ENCODE measurements at regions of chr2 and their contacts with region 1.

Region 1: GRCh38 chr2:178478439-178479274 is at the start of gene FKBP7:
- DNase-seq: peak; percentile 87 to 92 (median 90)
- H3K4me3 ChIP-seq: peak within 1 kb of the TSS; percentile 51 to 94 (median 78)
- H3K27ac ChIP-seq: peak within 1 kb of the TSS; percentile 83 to 100 (median 98)
- H3K27me3 ChIP-seq: no peaks in the 10 kb centered on the region
- CTCF ChIP-seq: peak in 55 of 56 donors; percentile 23 to 74 (median 55)
- total RNA-seq, gene FKBP7: 0.76 to 7.8 (median 3.0) TPM

Region 2: DNA sequence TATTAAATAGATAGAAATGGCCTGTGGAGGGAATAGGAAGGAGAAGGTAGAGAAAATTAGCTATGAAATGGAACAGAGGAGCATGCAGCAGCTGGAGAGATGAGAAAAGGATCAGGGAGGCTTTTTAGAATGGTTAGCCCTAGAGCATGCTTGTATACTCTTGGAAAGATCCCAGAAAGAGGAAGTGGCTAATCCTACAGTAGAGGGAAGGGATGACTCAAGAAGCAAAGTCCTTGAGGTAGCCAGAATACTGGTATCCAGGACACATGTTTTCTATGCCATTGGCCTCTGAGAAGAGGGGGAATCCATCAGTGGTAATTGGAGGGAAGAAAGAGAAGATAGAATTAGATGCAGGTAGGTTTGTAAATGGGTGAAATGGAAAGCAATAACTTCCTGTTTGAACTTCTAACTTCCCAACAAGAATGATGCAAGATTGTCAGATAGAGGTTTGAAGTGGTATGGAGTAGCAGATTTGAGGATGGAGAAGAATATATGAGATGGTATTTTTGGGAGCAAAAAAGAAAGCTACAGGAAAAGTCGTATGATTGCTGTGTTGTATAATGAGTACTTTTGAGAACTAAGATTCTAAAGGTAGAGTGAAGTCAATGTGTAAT is 301.5 kb before region 1 on chr2:
- intact Hi-C with region 1: no loop called
- DNase-seq: no peak
- H3K4me3 ChIP-seq: no peak overlapping the region
- H3K27ac ChIP-seq: no peak overlapping the region
- H3K27me3 ChIP-seq: no peaks in the 10 kb centered on the region
- CTCF ChIP-seq: no peak

Region 3: GRCh38 chr2:178450774-178451525 is 27.7 kb before region 1 on chr2 and contains the starts of genes PJVK and PRKRA:
- intact Hi-C with region 1: loop called (anchors 1 to 2 kb)
- DNase-seq: peak; percentile 94 to 100 (median 98)
- H3K4me3 ChIP-seq: peak within 1 kb of the TSS; percentile 74 to 99 (median 89)
- H3K27ac ChIP-seq: peak within 1 kb of the TSS; percentile 80 to 99 (median 97)
- H3K27me3 ChIP-seq: no peaks in the 10 kb centered on the region
- CTCF ChIP-seq: peak in 53 of 56 donors; percentile 10 to 73 (median 44)
- total RNA-seq, gene PJVK: 3.6 to 14.0 (median 7.5) TPM
- total RNA-seq, gene PRKRA: 39.3 to 68.9 (median 53.3) TPM

Measured in dorsolateral prefrontal cortex (tissue), 120 donors.